ENCODE measurements at regions of chr7 and their contacts with region 1.

Region 1: GRCh38 chr7:66628361-66629140 is at the start of gene KCTD7:
- DNase-seq: peak; percentile 93
- ATAC-seq: peak; percentile 88
- H3K4me3 Mint-ChIP-seq: peak within 1 kb of the TSS; percentile 92
- H3K27ac Mint-ChIP-seq: peak within 1 kb of the TSS; percentile 91
- H3K4me1 Mint-ChIP-seq: peaks cover 45% of the 10 kb centered on the region
- H3K27me3 Mint-ChIP-seq: no peaks in the 10 kb centered on the region
- CTCF ChIP-seq: no peak
- total RNA-seq, gene KCTD7: 12.8 and 13.2 TPM in 2 replicates

Region 2: GRCh38 chr7:66557608-66558143 is 70.9 kb before region 1 on chr7:
- CTCF ChIA-PET with region 1: interaction called, 7 read pairs
- POLR2A ChIA-PET with region 1: interaction called, 6 read pairs
- intact Hi-C with region 1: loop called (anchors 2 kb)
- DNase-seq: peak; percentile 73
- ATAC-seq: peak; percentile 93
- H3K4me3 Mint-ChIP-seq: no peak overlapping the region
- H3K27ac Mint-ChIP-seq: no peak overlapping the region
- H3K4me1 Mint-ChIP-seq: peaks cover 3% of the 10 kb centered on the region
- H3K27me3 Mint-ChIP-seq: no peaks in the 10 kb centered on the region
- CTCF ChIP-seq: peak; percentile 50

Region 3: DNA sequence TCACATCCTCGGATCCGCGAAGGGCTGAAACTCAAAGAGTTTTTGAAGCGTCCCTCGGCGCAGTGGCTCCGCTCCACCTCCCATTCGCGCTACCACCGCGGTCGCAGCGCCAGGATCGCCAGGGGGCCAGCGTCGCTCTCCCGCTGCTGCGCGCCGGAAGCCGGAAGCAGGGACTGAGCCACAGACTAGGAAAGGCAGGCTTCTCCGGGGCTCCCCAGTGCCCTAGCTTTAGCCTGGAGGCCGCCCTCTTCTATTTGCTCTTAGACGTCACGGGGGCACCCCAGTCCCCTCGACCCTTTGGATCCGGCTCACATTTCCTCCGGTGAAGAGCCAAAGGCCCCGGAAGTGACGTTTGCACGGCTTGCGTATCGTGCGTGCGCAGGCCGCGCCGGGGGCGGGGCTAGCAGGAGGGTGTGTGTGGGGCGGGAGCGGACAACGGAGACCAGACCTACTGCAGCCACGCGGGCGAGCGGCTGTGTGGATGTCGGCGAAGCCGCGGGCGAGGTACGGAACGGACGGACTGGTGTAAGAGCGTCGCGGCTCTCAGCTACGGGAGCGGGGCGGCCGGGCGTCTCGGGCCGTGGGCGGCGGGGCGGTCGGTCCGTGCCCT is 25.7 kb after region 1 on chr7:
- CTCF ChIA-PET with region 1: no interaction called
- POLR2A ChIA-PET with region 1: interaction called, 32 read pairs
- intact Hi-C with region 1: loop called (anchors 1 kb)
- DNase-seq: peak; percentile 97
- ATAC-seq: peak; percentile 91
- H3K4me3 Mint-ChIP-seq: peak overlapping the region; percentile 94
- H3K27ac Mint-ChIP-seq: peak overlapping the region; percentile 96
- H3K4me1 Mint-ChIP-seq: peaks cover 30% of the 10 kb centered on the region
- H3K27me3 Mint-ChIP-seq: no peaks in the 10 kb centered on the region
- CTCF ChIP-seq: no peak

Region 4: DNA sequence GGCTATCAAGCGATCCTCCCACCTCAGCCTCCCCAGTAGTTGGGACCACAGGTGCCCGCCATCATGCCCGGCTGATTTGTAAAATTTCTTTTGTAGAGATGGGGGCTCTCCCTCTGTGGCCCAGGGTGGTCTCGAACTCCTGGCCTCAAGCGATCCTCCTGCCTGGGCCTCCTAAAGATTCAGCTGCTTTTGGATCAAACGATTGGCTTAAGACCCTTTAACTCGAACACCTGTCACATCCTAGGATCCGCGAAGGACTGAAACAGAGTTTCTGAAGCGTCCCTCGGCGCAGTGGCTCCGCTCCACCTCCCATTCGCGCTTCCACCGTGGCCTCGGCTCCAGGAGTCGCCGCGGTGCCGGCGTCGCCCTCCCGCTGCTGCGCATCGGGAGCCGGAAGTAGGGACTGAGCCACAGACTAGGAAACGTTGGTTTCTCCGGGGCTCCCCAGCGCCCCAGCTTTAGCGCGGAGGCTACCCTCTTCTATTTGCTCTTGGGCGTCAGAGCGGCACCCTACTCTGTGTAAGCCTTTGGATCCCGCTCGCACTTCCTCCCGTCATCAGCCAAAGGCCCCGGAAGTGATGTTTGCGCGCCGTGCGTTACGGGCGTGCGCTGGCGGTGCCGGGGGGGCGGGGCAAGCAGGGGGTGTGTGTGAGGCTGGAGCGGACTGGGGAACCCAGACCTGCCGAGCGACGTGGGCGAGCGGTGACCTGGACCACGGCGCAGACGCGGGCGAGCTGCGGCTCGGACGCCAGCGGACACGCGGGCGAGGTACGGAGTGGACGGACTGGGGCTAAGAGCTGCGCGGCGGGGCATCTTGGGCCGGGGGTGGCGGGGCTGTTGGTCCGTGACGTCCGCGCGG is 53.2 kb after region 1 on chr7:
- CTCF ChIA-PET with region 1: no interaction called
- POLR2A ChIA-PET with region 1: interaction called, 3 read pairs
- intact Hi-C with region 1: loop called (anchors 1 kb)
- DNase-seq: peak; percentile 95
- ATAC-seq: peak; percentile 93
- H3K4me3 Mint-ChIP-seq: peak overlapping the region; percentile 89
- H3K27ac Mint-ChIP-seq: peak overlapping the region; percentile 89
- H3K4me1 Mint-ChIP-seq: peaks cover 48% of the 10 kb centered on the region
- H3K27me3 Mint-ChIP-seq: no peaks in the 10 kb centered on the region
- CTCF ChIP-seq: no peak

Region 5: DNA sequence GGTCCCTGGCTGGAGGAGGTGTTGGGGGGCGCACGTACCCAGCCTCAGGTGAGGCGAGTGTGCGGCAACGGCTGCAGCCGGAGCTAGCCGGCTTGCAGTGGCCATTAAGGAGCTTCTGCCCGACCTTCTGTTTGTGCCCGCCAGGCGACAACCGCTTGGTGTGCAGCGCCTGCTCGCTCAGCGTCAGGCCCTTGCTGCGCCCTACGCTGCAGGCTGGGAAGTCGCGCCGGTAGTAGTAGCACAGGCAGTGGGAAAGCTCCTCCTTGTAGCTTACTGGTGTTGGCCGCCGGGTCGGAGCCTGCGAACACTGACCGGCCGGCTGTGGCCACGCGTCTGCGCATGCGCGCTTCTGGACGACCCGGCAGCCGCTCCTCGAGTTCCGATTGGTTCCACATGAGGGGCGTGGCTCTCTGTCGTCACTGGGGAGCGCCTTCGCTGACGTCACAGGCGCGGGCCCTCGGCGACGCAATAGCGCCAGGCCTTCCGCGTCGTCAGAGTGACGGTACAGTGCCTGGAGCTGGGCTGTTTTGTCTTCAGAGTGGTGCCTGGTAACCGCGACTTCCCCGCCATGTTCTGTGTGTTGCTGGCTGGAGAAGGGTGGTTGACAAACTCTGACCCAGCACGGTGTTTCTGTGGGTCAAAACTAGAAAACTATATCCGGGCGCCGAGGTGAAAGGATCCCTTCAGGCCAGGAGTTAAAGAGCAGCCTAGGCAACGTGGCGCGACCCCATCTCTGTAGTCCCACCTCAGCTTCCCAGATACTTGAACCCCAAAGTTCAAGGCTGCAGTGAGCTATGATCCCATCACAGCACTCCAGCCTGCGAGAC is 216.2 kb after region 1 on chr7:
- CTCF ChIA-PET with region 1: no interaction called
- POLR2A ChIA-PET with region 1: interaction called, 13 read pairs
- intact Hi-C with region 1: no loop called
- DNase-seq: peak; percentile 99
- ATAC-seq: peak; percentile 87
- H3K4me3 Mint-ChIP-seq: peak overlapping the region; percentile 98
- H3K27ac Mint-ChIP-seq: peak overlapping the region; percentile 99
- H3K4me1 Mint-ChIP-seq: peaks cover 29% of the 10 kb centered on the region
- H3K27me3 Mint-ChIP-seq: peaks cover 2% of the 10 kb centered on the region
- CTCF ChIP-seq: no peak

Measured in activated B cell treated with CpG ODN at 0.5 μM for 24 hours (primary cell).